ENCODE measurements at regions of chr1 and their contacts with region 1.

Region 1: GRCh38 chr1:8848663-8849386 is 29.7 kb downstream of the ENO1 start:
- DNase-seq: peak; percentile 80
- ATAC-seq: peak; percentile 96
- H3K4me3 Mint-ChIP-seq: no peak overlapping the region
- H3K27ac Mint-ChIP-seq: no peak overlapping the region
- H3K4me1 Mint-ChIP-seq: peaks cover 12% of the 10 kb centered on the region
- H3K27me3 Mint-ChIP-seq: peaks cover 2% of the 10 kb centered on the region

Region 2: DNA sequence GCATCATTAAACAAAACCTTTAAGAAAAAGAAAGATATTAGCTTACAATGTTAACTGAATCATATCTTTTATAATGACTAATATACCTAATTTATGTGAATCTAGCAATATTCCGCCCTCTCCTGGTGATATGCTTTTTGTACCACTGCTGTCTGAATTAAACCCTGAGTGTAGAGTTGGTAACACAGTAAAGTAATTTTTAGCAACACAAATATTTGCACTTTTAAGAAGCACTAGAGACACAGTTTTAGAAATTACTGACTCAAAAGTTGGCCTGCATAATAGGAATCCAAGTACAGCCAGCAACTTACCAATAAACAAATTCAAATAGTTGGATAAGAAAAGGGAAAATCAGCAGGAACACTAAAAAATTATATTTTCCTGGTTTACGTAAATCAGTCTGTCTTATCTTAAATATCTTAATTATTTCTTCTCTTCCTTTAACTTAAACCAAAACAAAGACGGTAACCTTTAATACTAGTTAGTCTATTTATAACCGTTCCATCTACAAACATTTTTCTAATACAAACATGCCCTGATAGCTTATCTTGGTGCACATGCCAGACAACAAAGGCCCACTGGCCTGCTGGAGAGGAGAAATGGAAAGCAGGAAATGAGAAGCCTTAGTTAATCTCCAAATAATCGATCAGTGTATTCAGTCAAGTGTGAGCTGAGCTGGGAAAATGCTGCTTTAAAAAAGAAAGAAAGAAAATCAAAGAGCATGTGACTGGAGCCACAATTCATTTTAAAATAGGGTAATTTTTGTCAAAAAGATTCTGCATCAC is 277.4 kb before region 1 on chr1:
- CTCF ChIA-PET with region 1: interaction called, 11 read pairs
- POLR2A ChIA-PET with region 1: no interaction called
- DNase-seq: no peak
- ATAC-seq: no peak
- H3K4me3 Mint-ChIP-seq: no peak overlapping the region
- H3K27ac Mint-ChIP-seq: no peak overlapping the region
- H3K4me1 Mint-ChIP-seq: no peaks in the 10 kb centered on the region
- H3K27me3 Mint-ChIP-seq: no peaks in the 10 kb centered on the region

Region 3: GRCh38 chr1:8702850-8703810 is 145.7 kb before region 1 on chr1:
- CTCF ChIA-PET with region 1: interaction called, 18 read pairs
- POLR2A ChIA-PET with region 1: interaction called, 4 read pairs
- DNase-seq: peak; percentile 72
- ATAC-seq: peak; percentile 67
- H3K4me3 Mint-ChIP-seq: peak overlapping the region; percentile 85
- H3K27ac Mint-ChIP-seq: peak overlapping the region; percentile 84
- H3K4me1 Mint-ChIP-seq: peaks cover 44% of the 10 kb centered on the region
- H3K27me3 Mint-ChIP-seq: peaks cover 26% of the 10 kb centered on the region

Region 4: GRCh38 chr1:8816831-8817405 is 31.9 kb before region 1 on chr1:
- CTCF ChIA-PET with region 1: interaction called, 26 read pairs
- POLR2A ChIA-PET with region 1: no interaction called
- DNase-seq: peak; percentile 28
- ATAC-seq: peak; percentile 29
- H3K4me3 Mint-ChIP-seq: peak overlapping the region; percentile 84
- H3K27ac Mint-ChIP-seq: peak overlapping the region; percentile 87
- H3K4me1 Mint-ChIP-seq: peaks cover 37% of the 10 kb centered on the region
- H3K27me3 Mint-ChIP-seq: peaks cover 7% of the 10 kb centered on the region

Region 5: GRCh38 chr1:8822373-8823294 is 26.2 kb before region 1 on chr1:
- CTCF ChIA-PET with region 1: interaction called, 26 read pairs
- POLR2A ChIA-PET with region 1: no interaction called
- DNase-seq: no peak
- ATAC-seq: no peak
- H3K4me3 Mint-ChIP-seq: no peak overlapping the region
- H3K27ac Mint-ChIP-seq: no peak overlapping the region
- H3K4me1 Mint-ChIP-seq: peaks cover 6% of the 10 kb centered on the region
- H3K27me3 Mint-ChIP-seq: peaks cover 13% of the 10 kb centered on the region

Region 6: DNA sequence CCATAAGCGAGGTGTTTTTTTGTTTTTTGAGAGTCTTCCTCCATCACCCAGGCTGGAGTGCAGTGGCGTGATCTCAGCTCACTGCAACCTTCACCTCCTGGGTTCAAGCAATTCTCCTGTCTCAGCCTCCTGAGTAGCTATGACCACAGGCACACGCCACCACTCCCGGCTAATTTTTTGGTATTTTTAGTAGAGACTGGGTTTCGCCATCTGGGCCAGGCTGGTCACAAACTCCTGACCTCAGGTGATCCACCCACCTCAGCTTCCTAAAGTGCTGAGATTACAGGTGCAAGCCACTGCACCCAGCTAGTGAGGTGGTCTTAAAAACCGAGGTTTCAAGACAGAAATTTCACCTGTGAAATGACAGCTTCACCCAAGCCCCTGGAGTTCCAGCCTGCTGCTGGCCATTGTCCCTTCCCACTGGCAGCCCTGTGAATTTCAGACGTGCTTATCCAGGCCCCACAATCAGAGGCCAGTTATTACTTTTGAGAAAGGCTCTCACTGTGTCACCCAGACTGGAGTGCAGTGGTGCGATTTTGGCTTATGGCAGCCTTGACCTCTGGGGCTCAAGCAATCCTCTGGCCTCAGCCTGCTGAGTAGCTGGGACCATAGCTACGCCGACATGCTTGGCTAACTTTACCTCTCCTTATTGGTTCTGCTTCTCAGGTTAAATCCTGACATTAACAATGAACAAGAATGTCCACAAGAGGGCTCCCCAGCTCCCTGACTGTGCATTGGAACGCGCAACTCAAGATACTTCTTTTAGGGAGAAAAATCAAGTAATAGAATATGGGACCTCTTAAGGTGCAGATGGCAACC is 10.3 kb after region 1 on chr1:
- CTCF ChIA-PET with region 1: interaction called, 130 read pairs
- POLR2A ChIA-PET with region 1: interaction called, 4 read pairs
- DNase-seq: peak; percentile 74
- ATAC-seq: peak; percentile 52
- H3K4me3 Mint-ChIP-seq: peak overlapping the region; percentile 42
- H3K27ac Mint-ChIP-seq: peak overlapping the region; percentile 77
- H3K4me1 Mint-ChIP-seq: peaks cover 64% of the 10 kb centered on the region
- H3K27me3 Mint-ChIP-seq: no peaks in the 10 kb centered on the region

Region 7: GRCh38 chr1:9069326-9070100 is 220.7 kb after region 1 on chr1 and contains the start of gene SLC2A5:
- CTCF ChIA-PET with region 1: no interaction called
- POLR2A ChIA-PET with region 1: no interaction called
- DNase-seq: no peak
- ATAC-seq: no peak
- H3K4me3 Mint-ChIP-seq: no peak within 1 kb of the TSS
- H3K27ac Mint-ChIP-seq: no peak within 1 kb of the TSS
- H3K4me1 Mint-ChIP-seq: peaks cover 10% of the 10 kb centered on the region
- H3K27me3 Mint-ChIP-seq: peaks cover 37% of the 10 kb centered on the region
- total RNA-seq, gene SLC2A5: not detected